Naive thymus-derived CD4-positive, alpha-beta T cell (primary cell): ENCODE measurements at regions of chr17 and their contacts with region 1.

Region 1: DNA sequence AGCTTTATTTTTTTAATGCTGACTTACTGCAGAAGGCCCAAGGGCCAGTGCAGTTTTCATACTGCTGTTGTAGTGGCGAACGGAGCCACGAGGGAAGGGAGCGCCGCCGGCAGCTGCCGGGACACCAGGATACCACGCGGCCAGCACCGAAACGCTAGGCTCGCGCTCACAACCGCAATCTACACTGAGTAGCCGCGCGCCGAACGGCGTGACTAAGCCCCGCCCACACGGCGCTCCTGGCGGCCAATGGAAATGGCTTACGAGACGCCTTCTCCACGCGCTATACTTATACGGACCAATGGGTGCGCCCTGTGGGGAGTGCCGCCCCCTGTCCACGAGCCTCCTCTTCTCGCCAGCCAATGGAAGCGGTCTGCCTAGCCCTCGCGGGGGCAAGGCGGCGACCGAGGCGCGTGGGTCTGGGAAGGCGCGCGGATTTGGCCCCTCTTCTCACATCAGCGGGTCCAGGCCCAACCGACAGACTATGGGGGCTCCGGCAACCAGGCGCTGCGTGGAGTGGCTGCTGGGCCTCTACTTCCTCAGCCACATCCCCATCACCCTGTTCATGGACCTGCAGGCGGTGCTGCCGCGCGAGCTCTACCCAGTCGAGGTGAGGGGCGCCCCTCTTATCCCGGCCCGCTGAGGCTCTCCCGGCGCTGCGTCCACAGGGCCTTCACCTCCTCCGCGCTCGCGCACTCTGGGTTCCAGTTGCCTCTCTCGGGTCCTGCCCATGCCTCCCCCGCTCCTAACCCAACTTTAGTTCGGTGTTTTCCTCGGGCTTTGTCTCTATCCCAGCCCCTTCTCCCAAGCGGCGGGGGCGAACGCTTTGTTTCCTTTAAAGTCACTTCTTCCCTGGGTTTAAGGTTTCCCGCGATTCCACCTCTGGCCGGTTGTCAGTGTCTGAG is at the start of gene TMEM97:
- DNase-seq: peak; percentile 83 to 95 (median 93)
- ATAC-seq: peak; percentile 99
- H3K4me3 ChIP-seq: peak within 1 kb of the TSS; percentile 69
- H3K4me3 Mint-ChIP-seq: peak within 1 kb of the TSS; percentile 77 to 97 (median 91)
- H3K27ac ChIP-seq: peak within 1 kb of the TSS; percentile 64
- H3K27ac Mint-ChIP-seq: peak within 1 kb of the TSS; percentile 37 to 90 (median 80)
- H3K4me1 ChIP-seq: peaks cover 11 to 12% of the 10 kb centered on the region in 2 donors
- H3K4me1 Mint-ChIP-seq: peaks cover 9 to 40% (median 21%) of the 10 kb centered on the region in 7 donors
- H3K27me3 ChIP-seq: no peaks in the 10 kb centered on the region
- H3K27me3 Mint-ChIP-seq: no peaks in the 10 kb centered on the region
- total RNA-seq, gene TMEM97: 2.9 to 19.9 (median 4.8) TPM

Region 2: GRCh38 chr17:28357061-28357900 is 38.3 kb after region 1 on chr17 and contains the start of gene POLDIP2:
- CTCF ChIA-PET with region 1: interaction called, 3 read pairs
- POLR2A ChIA-PET with region 1: no interaction called
- intact Hi-C with region 1: loop called (anchors 1 kb)
- DNase-seq: peak; percentile 94 to 97 (median 96)
- ATAC-seq: peak; percentile 99
- H3K4me3 ChIP-seq: peak within 1 kb of the TSS; percentile 80
- H3K4me3 Mint-ChIP-seq: peak within 1 kb of the TSS; percentile 91 to 98 (median 94)
- H3K27ac ChIP-seq: peak within 1 kb of the TSS; percentile 90
- H3K27ac Mint-ChIP-seq: peak within 1 kb of the TSS; percentile 89 to 97 (median 94)
- H3K4me1 ChIP-seq: peaks cover 17 to 21% of the 10 kb centered on the region in 2 donors
- H3K4me1 Mint-ChIP-seq: peaks cover 19 to 40% (median 29%) of the 10 kb centered on the region in 7 donors
- H3K27me3 ChIP-seq: no peaks in the 10 kb centered on the region
- H3K27me3 Mint-ChIP-seq: no peaks in the 10 kb centered on the region
- total RNA-seq, gene POLDIP2: 27.9 to 64.9 (median 29.8) TPM